ENCODE measurements at regions of chr7 and their contacts with region 1.

Region 1: DNA sequence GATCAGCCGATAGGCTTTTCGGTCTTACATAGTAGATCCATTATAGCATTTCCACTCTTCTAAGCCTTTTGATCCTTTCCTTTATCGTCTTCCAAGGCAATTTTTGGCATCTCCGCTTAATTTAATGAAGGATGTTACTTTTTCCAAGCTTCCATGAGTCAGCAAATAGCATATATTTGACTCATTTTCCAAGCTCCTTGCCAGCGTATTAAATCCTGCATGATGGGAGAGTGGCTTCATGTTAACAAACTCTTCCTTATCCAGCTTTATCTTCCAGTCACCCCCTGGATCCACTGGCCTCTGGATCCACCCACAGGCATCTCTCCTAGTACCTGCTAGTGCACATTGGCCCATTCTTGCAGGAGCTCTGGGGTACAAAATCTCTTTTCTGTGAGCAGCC is 13.0 kb downstream of the OR9A2 start:
- DNase-seq: no peak
- ATAC-seq: no peak
- H3K4me3 Mint-ChIP-seq: peak overlapping the region; percentile 21
- H3K27ac Mint-ChIP-seq: peak overlapping the region; percentile 95
- H3K4me1 Mint-ChIP-seq: peaks cover 83% of the 10 kb centered on the region
- H3K27me3 Mint-ChIP-seq: no peaks in the 10 kb centered on the region
- CTCF ChIP-seq: no peak

Region 2: GRCh38 chr7:141558544-141559183 is 1455.2 kb before region 1 on chr7:
- CTCF ChIA-PET with region 1: no interaction called
- POLR2A ChIA-PET with region 1: no interaction called
- intact Hi-C with region 1: no loop called
- DNase-seq: no peak
- ATAC-seq: no peak
- H3K4me3 Mint-ChIP-seq: no peak overlapping the region
- H3K27ac Mint-ChIP-seq: no peak overlapping the region
- H3K4me1 Mint-ChIP-seq: peaks cover 7% of the 10 kb centered on the region
- H3K27me3 Mint-ChIP-seq: no peaks in the 10 kb centered on the region
- CTCF ChIP-seq: no peak

Region 3: DNA sequence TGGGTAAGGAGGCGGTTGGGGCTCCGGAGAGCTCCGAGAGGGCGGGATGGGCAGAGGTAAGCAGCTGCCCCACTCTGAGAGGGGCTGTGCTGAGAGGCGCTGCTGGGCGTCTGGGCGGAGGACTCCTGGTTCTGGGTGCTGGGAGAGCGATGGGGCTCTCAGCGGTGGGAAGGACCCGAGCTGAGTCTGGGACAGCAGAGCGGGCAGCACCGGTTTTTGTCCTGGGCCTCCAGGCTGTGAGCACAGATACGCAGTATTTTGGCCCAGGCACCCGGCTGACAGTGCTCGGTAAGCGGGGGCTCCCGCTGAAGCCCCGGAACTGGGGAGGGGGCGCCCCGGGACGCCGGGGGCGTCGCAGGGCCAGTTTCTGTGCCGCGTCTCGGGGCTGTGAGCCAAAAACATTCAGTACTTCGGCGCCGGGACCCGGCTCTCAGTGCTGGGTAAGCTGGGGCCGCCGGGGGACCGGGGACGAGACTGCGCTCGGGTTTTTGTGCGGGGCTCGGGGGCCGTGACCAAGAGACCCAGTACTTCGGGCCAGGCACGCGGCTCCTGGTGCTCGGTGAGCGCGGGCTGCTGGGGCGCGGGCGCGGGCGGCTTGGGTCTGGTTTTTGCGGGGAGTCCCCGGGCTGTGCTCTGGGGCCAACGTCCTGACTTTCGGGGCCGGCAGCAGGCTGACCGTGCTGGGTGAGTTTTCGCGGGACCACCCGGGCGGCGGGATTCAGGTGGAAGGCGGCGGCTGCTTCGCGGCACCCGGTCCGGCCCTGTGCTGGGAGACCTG is 217.1 kb before region 1 on chr7:
- CTCF ChIA-PET with region 1: no interaction called
- POLR2A ChIA-PET with region 1: interaction called, 22 read pairs
- intact Hi-C with region 1: no loop called
- DNase-seq: peak; percentile 47
- ATAC-seq: peak; percentile 44
- H3K4me3 Mint-ChIP-seq: peak overlapping the region; percentile 97
- H3K27ac Mint-ChIP-seq: peak overlapping the region; percentile 99
- H3K4me1 Mint-ChIP-seq: peaks cover 83% of the 10 kb centered on the region
- H3K27me3 Mint-ChIP-seq: no peaks in the 10 kb centered on the region
- CTCF ChIP-seq: no peak

Region 4: DNA sequence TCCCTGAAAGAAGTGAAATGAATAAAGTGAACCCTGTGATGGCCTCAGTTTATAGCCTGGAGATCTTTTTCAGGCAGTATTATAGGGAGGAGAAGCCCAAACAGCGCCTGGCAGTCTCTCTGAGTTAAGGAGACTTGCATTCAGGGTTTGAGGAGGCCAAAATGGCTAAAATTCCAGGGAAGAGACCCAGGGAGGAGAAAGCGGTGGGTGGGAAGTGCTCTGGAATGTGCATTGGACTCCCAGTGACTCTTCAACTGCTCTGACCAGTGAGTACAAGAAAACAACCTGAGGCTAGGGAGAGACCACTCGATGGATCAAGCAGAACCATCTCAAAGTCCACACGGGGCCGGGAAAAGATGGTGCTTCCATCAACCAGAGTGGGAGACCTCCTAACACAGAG is 194.4 kb before region 1 on chr7:
- CTCF ChIA-PET with region 1: no interaction called
- POLR2A ChIA-PET with region 1: no interaction called
- intact Hi-C with region 1: no loop called
- DNase-seq: no peak
- ATAC-seq: no peak
- H3K4me3 Mint-ChIP-seq: no peak overlapping the region
- H3K27ac Mint-ChIP-seq: no peak overlapping the region
- H3K4me1 Mint-ChIP-seq: peaks cover 4% of the 10 kb centered on the region
- H3K27me3 Mint-ChIP-seq: no peaks in the 10 kb centered on the region
- CTCF ChIP-seq: no peak

Region 5: GRCh38 chr7:143126140-143126539 is 112.2 kb after region 1 on chr7:
- CTCF ChIA-PET with region 1: interaction called, 5 read pairs
- POLR2A ChIA-PET with region 1: no interaction called
- intact Hi-C with region 1: loop called (anchors 2 kb)
- DNase-seq: no peak
- ATAC-seq: peak; percentile 87
- H3K4me3 Mint-ChIP-seq: no peak overlapping the region
- H3K27ac Mint-ChIP-seq: peak overlapping the region; percentile 6
- H3K4me1 Mint-ChIP-seq: peaks cover 28% of the 10 kb centered on the region
- H3K27me3 Mint-ChIP-seq: no peaks in the 10 kb centered on the region
- CTCF ChIP-seq: no peak

Measured in activated B cell treated with CpG ODN at 0.5 μM for 24 hours (primary cell).